ENCODE measurements at regions of chr13 and their contacts with region 1.

Region 1: GRCh38 chr13:106680796-106681472 is 113.0 kb upstream of the ARGLU1 start:
- DNase-seq: peak; percentile 16 to 23
- ATAC-seq: peak in 6 of 8 donors; percentile 55 to 88 (median 77)
- H3K4me3 ChIP-seq: no peak overlapping the region
- H3K27ac ChIP-seq: peak overlapping the region in 8 of 10 donors; percentile 16 to 72 (median 50)
- H3K4me1 ChIP-seq: peaks cover 0 to 45% (median 16%) of the 10 kb centered on the region in 9 donors
- H3K27me3 ChIP-seq: no peaks in the 10 kb centered on the region
- CTCF ChIP-seq: no peak

Region 2: DNA sequence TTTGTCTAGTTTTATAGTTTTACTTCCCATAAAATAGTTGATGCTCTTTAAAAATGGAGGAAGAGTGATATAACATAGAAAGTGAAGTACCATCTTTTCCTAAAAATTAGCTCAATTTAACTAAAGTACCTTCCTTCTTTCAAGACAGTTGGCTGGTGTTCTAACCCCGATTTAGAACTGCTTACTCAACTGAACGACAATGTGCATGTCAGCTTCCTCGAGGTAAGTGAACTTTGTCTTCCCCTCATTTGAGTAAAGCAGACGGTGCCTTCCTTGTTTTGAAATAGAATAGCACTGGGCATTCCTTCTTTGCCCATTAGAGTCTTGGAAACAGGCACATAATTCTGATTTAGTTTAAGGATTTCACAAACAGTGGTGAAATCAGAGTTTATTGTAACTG is 1664.7 kb before region 1 on chr13:
- intact Hi-C with region 1: loop called in 1 of 10 experiments (anchors 10 kb)
- DNase-seq: no peak
- ATAC-seq: no peak
- H3K4me3 ChIP-seq: no peak overlapping the region
- H3K27ac ChIP-seq: no peak overlapping the region
- H3K4me1 ChIP-seq: no peaks in the 10 kb centered on the region
- H3K27me3 ChIP-seq: no peaks in the 10 kb centered on the region
- CTCF ChIP-seq: no peak

Region 3: DNA sequence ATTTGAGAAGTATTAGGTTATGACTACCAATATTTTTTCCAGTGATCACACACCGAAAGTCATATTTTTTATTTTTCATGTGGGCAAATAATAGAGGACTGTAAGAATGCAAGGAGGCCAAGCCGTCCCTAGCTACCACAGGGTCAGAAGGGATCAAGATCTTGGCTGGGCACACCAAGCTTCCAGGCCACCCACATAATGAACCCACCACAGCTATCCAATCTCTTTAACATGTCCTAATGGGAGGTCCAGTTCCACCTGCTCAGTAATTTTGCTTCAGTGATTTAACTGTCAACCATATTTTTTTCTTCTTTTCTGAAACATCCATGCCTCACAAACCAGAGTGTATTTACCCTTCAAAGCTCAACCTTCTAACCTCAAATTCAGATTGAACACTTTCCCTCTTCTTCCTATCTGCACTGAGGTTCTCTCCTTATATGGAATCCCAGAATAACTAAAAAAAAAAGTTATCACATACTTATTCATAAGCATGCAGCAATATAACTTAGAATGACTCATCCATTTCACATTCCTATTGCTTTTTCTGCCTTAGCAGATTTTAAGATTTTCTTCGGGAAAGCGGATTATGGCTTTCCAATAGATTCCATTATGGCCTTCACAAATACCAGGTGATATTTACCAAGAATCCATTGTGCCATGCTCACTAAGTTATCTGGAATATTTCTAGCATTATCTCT is 125.2 kb before region 1 on chr13:
- intact Hi-C with region 1: loop called in 2 of 10 experiments (anchors 10 kb)
- DNase-seq: no peak
- ATAC-seq: no peak
- H3K4me3 ChIP-seq: no peak overlapping the region
- H3K27ac ChIP-seq: no peak overlapping the region
- H3K4me1 ChIP-seq: peaks cover 5 to 89% (median 55%) of the 10 kb centered on the region in 9 donors
- H3K27me3 ChIP-seq: no peaks in the 10 kb centered on the region
- CTCF ChIP-seq: no peak

Region 4: GRCh38 chr13:106567474-106568298 is 113.2 kb before region 1 on chr13 and contains the start of gene ARGLU1:
- intact Hi-C with region 1: loop called in 1 of 10 experiments (anchors 10 kb)
- DNase-seq: peak; percentile 94 to 96
- ATAC-seq: peak; percentile 90 to 98 (median 96)
- H3K4me3 ChIP-seq: peak within 1 kb of the TSS; percentile 66 to 96 (median 87)
- H3K27ac ChIP-seq: peak within 1 kb of the TSS; percentile 92 to 99 (median 97)
- H3K4me1 ChIP-seq: peaks cover 15 to 54% (median 44%) of the 10 kb centered on the region in 9 donors
- H3K27me3 ChIP-seq: no peaks in the 10 kb centered on the region
- CTCF ChIP-seq: no peak
- total RNA-seq, gene ARGLU1: 19.1 to 42.2 (median 29.6) TPM

Region 5: GRCh38 chr13:106612688-106613087 is 68.2 kb before region 1 on chr13:
- intact Hi-C with region 1: no loop called
- DNase-seq: peak; percentile 56 to 59
- ATAC-seq: peak in 4 of 8 donors; percentile 28 to 61 (median 47)
- H3K4me3 ChIP-seq: no peak overlapping the region
- H3K27ac ChIP-seq: no peak overlapping the region
- H3K4me1 ChIP-seq: peaks cover 0 to 7% (median 0%) of the 10 kb centered on the region in 9 donors
- H3K27me3 ChIP-seq: no peaks in the 10 kb centered on the region
- CTCF ChIP-seq: no peak

Region 6: GRCh38 chr13:106637519-106637918 is 43.4 kb before region 1 on chr13:
- intact Hi-C with region 1: loop called in 1 of 10 experiments (anchors 5 kb)
- DNase-seq: no peak
- ATAC-seq: no peak
- H3K4me3 ChIP-seq: no peak overlapping the region
- H3K27ac ChIP-seq: peak overlapping the region in 2 of 10 donors; percentile 24 to 55
- H3K4me1 ChIP-seq: peaks cover 0 to 48% (median 17%) of the 10 kb centered on the region in 9 donors
- H3K27me3 ChIP-seq: no peaks in the 10 kb centered on the region
- CTCF ChIP-seq: no peak

Region 7: DNA sequence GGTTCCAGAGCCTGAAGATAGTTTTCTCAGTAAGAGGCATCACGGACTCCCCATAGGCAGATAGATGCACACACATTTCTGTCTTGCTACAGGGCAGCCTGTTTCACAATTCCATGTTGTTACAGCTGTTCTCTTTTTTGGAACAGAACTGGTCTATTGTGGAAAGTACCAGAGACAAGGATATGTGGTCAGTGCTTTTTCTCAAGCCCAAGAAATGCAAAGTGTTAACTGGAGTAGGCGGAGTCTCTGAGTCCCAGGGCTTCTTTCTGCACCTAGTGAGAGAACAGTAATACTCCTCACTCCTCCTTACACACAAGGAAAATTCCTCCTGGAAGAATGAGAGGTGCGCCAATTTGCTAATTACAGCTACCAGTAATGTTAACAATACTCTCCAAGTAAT is 28.6 kb after region 1 on chr13:
- intact Hi-C with region 1: no loop called
- DNase-seq: peak in 1 of 2 donors; percentile 54
- ATAC-seq: peak; percentile 70 to 92 (median 88)
- H3K4me3 ChIP-seq: peak overlapping the region in 8 of 10 donors; percentile 19 to 50 (median 40)
- H3K27ac ChIP-seq: peak overlapping the region; percentile 65 to 90 (median 82)
- H3K4me1 ChIP-seq: peaks cover 0 to 67% (median 17%) of the 10 kb centered on the region in 9 donors
- H3K27me3 ChIP-seq: no peaks in the 10 kb centered on the region
- CTCF ChIP-seq: no peak

Region 8: GRCh38 chr13:107124129-107124718 is 443.3 kb after region 1 on chr13:
- intact Hi-C with region 1: loop called in 3 of 10 experiments (anchors 5 to 10 kb)
- DNase-seq: no peak
- ATAC-seq: no peak
- H3K4me3 ChIP-seq: no peak overlapping the region
- H3K27ac ChIP-seq: no peak overlapping the region
- H3K4me1 ChIP-seq: peaks cover 0 to 6% (median 0%) of the 10 kb centered on the region in 9 donors
- H3K27me3 ChIP-seq: no peaks in the 10 kb centered on the region
- CTCF ChIP-seq: peak; percentile 54 to 88 (median 66)

Measured in heart right ventricle (tissue), 16 donors.